ENCODE measurements at regions of chr14 and their contacts with region 1.

Region 1: DNA sequence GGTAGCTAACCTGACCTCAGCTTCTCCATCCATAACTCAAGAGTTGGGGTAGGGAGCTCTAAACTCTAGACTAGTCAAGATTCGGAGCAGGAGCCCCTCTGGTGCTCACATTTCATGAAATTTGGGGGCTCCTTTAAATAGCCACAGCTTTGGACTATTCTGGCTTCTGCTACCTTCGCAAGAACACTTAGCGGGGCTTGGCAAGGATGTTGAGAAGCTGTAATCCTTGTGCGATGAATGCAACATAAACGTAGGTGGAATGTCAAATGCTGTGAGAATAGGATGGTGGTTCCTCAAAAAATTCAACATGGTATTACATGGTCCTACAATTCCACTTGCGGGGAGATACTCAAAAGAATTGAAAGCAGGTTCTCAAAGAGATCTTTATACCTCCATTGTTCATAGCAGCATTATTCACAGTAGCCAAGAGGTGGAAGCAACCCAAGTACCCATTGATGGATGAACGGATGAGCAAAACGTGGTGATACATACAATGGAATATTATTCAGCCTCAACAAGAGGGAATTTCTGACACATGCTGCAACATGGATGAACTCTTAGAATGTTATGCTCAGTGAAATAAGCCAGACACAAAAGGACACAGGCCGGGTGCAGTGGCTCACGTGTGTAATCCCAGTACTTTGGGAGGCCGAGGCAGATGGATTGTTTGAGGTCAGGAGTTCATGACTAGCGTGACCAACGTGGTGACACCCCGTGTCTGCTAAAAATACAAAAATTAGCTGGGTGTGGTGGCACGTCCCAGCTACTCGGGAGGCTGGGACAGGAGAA is 73.8 kb downstream of the ACTN1 start:
- DNase-seq: no peak
- ATAC-seq: no peak
- H3K4me3 ChIP-seq: no peak overlapping the region
- H3K27ac ChIP-seq: no peak overlapping the region
- H3K4me1 ChIP-seq: no peaks in the 10 kb centered on the region
- H3K27me3 ChIP-seq: no peaks in the 10 kb centered on the region
- CTCF ChIP-seq: no peak

Region 2: GRCh38 chr14:68979021-68979782 is 73.9 kb after region 1 on chr14 and contains the start of gene ACTN1:
- intact Hi-C with region 1: loop called (anchors 10 kb)
- DNase-seq: peak; percentile 97
- ATAC-seq: peak; percentile 94
- H3K4me3 ChIP-seq: peak within 1 kb of the TSS; percentile 92
- H3K27ac ChIP-seq: peak within 1 kb of the TSS; percentile 93
- H3K4me1 ChIP-seq: peaks cover 25% of the 10 kb centered on the region
- H3K27me3 ChIP-seq: no peaks in the 10 kb centered on the region
- CTCF ChIP-seq: no peak
- total RNA-seq, gene ACTN1: 177 TPM